ENCODE measurements at regions of chr5 and their contacts with region 1.

Region 1: DNA sequence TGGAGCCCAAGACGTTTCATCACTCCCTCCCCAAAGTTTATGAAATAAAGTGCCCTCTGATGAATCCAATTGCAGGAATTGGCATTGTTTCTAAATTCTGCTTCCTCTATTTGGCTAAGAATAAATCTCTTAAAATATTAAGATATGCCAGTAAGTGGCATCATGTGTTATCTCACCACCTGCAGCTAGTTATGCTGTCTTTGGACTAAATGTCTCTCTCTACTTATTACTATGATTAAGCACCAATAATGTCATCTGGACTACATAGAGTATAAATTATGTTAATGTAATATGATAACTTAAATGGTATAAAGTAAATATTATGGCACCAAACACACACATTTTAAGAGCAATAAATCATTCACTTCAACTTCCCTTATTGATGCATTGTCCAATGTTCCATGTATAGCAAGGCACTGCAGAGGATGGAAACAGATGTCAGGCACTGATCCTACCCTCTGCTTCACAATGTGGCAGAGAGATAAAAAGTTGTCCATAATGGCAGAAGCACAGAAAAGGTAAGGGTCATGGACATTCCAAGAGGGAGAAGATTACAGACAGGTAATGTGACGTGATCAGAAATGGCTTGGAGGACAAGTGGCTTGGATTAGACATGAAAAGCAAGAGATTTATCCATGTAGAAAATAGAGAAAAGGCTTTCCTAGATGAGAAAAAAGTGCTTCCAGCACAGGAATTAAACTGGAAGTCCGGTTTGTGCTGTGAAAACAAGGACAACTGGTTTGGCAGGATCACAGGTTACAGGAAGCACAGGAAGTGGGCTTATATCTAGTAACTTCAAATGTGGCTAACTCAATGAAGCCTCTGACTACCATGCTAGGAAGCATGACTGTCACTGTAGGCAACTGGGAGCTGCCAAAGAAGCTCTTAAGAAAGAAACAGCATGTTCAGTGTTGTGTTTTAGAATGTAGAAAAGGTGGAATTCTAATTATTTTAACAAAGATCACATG is 26.7 kb downstream of the MARCHF11 start:
- DNase-seq: no peak
- CTCF ChIP-seq: no peak

Region 2: GRCh38 chr5:16456103-16456832 is 303.4 kb after region 1 on chr5:
- in situ Hi-C with region 1: loop called (anchors 10 kb)
- DNase-seq: peak; percentile 46
- CTCF ChIP-seq: peak; percentile 57

Measured in GM13976 (cell line).